ENCODE measurements at regions of chr1 and their contacts with region 1.

Region 1: GRCh38 chr1:112803906-112804762 is 89.0 kb upstream of the PPM1J start:
- DNase-seq: peak; percentile 87
- ATAC-seq: peak; percentile 99
- H3K4me3 ChIP-seq: no peak overlapping the region
- H3K27ac ChIP-seq: no peak overlapping the region
- H3K4me1 ChIP-seq: 0 out of 2 replicates have a peak, but pooled peaks cover 6% of the 10 kb centered on the region
- H3K27me3 ChIP-seq: no peaks in the 10 kb centered on the region
- CTCF ChIP-seq: peak; percentile 93

Region 2: GRCh38 chr1:112778137-112778536 is 26.0 kb before region 1 on chr1:
- CTCF ChIA-PET with region 1: no interaction called
- POLR2A ChIA-PET with region 1: interaction called, 11 read pairs
- intact Hi-C with region 1: no loop called
- DNase-seq: no peak
- ATAC-seq: no peak
- H3K4me3 ChIP-seq: no peak overlapping the region
- H3K27ac ChIP-seq: no peak overlapping the region
- H3K4me1 ChIP-seq: no peaks in the 10 kb centered on the region
- H3K27me3 ChIP-seq: no peaks in the 10 kb centered on the region
- CTCF ChIP-seq: no peak

Region 3: GRCh38 chr1:112788561-112788960 is 15.6 kb before region 1 on chr1:
- CTCF ChIA-PET with region 1: no interaction called
- POLR2A ChIA-PET with region 1: no interaction called
- intact Hi-C with region 1: no loop called
- DNase-seq: no peak
- ATAC-seq: no peak
- H3K4me3 ChIP-seq: no peak overlapping the region
- H3K27ac ChIP-seq: no peak overlapping the region
- H3K4me1 ChIP-seq: no peaks in the 10 kb centered on the region
- H3K27me3 ChIP-seq: no peaks in the 10 kb centered on the region
- CTCF ChIP-seq: no peak

Region 4: GRCh38 chr1:112887599-112888283 is 83.6 kb after region 1 on chr1:
- CTCF ChIA-PET with region 1: no interaction called
- POLR2A ChIA-PET with region 1: no interaction called
- intact Hi-C with region 1: no loop called
- DNase-seq: peak; percentile 9
- ATAC-seq: peak; percentile 22; the same call in 1 of the 2 replicates
- H3K4me3 ChIP-seq: no peak overlapping the region
- H3K27ac ChIP-seq: no peak overlapping the region
- H3K4me1 ChIP-seq: no peaks in the 10 kb centered on the region
- H3K27me3 ChIP-seq: no peaks in the 10 kb centered on the region
- CTCF ChIP-seq: no peak